ENCODE measurements at regions of chr12 and their contacts with region 1.

Region 1: GRCh38 chr12:57452937-57453509 is 2.1 kb upstream of the INHBE start:
- DNase-seq: peak in 1 of 5 donors; percentile 41
- H3K4me3 ChIP-seq: no peak overlapping the region
- H3K4me3 Mint-ChIP-seq: no peak overlapping the region
- H3K27ac ChIP-seq: no peak overlapping the region
- H3K27ac Mint-ChIP-seq: no peak overlapping the region
- H3K4me1 ChIP-seq: peaks cover 4% of the 10 kb centered on the region
- H3K4me1 Mint-ChIP-seq: peaks cover 3 to 12% (median 6%) of the 10 kb centered on the region in 4 donors
- H3K27me3 ChIP-seq: no peaks in the 10 kb centered on the region
- H3K27me3 Mint-ChIP-seq: peaks cover 0 to 6% of the 10 kb centered on the region in 2 donors

Region 2: DNA sequence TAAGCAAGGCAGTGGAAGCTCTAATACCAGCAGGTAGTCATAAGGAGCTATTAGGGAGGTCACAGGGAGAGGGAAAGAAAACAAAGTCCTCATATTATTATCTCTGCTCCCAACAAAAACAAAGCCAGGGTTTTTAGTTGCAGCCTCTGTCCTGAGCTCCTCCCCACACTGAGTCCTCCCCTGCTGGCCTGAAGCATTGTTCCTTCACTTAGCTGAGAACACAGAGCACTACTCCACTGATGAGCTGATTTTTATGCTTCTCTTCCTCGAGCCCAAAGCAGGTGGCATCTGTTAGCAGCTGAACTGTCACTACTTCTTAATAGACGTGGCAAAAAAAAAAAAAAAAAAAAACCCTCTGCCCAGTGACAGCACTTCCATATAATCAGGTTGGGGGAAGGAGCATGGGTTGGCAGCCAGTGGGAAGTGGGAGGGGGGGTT is 191.6 kb before region 1 on chr12:
- CTCF ChIA-PET with region 1: interaction called, 43 read pairs
- POLR2A ChIA-PET with region 1: no interaction called
- intact Hi-C with region 1: loop called (anchors 1 kb)
- DNase-seq: no peak
- H3K4me3 ChIP-seq: no peak overlapping the region
- H3K4me3 Mint-ChIP-seq: no peak overlapping the region
- H3K27ac ChIP-seq: no peak overlapping the region
- H3K27ac Mint-ChIP-seq: peak overlapping the region in 1 of 7 donors; percentile 30
- H3K4me1 ChIP-seq: no peaks in the 10 kb centered on the region
- H3K4me1 Mint-ChIP-seq: peaks cover 0 to 4% (median 2%) of the 10 kb centered on the region in 4 donors
- H3K27me3 ChIP-seq: no peaks in the 10 kb centered on the region
- H3K27me3 Mint-ChIP-seq: no peaks in the 10 kb centered on the region

Region 3: GRCh38 chr12:57309420-57309819 is 143.6 kb before region 1 on chr12:
- CTCF ChIA-PET with region 1: interaction called, 16 read pairs
- POLR2A ChIA-PET with region 1: no interaction called
- intact Hi-C with region 1: no loop called
- DNase-seq: no peak
- H3K4me3 ChIP-seq: no peak overlapping the region
- H3K4me3 Mint-ChIP-seq: no peak overlapping the region
- H3K27ac ChIP-seq: no peak overlapping the region
- H3K27ac Mint-ChIP-seq: peak overlapping the region in 1 of 7 donors; percentile 40
- H3K4me1 ChIP-seq: no peaks in the 10 kb centered on the region
- H3K4me1 Mint-ChIP-seq: peaks cover 0 to 4% (median 2%) of the 10 kb centered on the region in 4 donors
- H3K27me3 ChIP-seq: no peaks in the 10 kb centered on the region
- H3K27me3 Mint-ChIP-seq: no peaks in the 10 kb centered on the region

Region 4: GRCh38 chr12:57355734-57356133 is 97.3 kb before region 1 on chr12:
- CTCF ChIA-PET with region 1: no interaction called
- POLR2A ChIA-PET with region 1: no interaction called
- intact Hi-C with region 1: no loop called
- DNase-seq: no peak
- H3K4me3 ChIP-seq: no peak overlapping the region
- H3K4me3 Mint-ChIP-seq: no peak overlapping the region
- H3K27ac ChIP-seq: no peak overlapping the region
- H3K27ac Mint-ChIP-seq: peak overlapping the region in 1 of 7 donors; percentile 30
- H3K4me1 ChIP-seq: no peaks in the 10 kb centered on the region
- H3K4me1 Mint-ChIP-seq: peaks cover 0 to 5% (median under 1%) of the 10 kb centered on the region in 4 donors
- H3K27me3 ChIP-seq: no peaks in the 10 kb centered on the region
- H3K27me3 Mint-ChIP-seq: no peaks in the 10 kb centered on the region

Region 5: DNA sequence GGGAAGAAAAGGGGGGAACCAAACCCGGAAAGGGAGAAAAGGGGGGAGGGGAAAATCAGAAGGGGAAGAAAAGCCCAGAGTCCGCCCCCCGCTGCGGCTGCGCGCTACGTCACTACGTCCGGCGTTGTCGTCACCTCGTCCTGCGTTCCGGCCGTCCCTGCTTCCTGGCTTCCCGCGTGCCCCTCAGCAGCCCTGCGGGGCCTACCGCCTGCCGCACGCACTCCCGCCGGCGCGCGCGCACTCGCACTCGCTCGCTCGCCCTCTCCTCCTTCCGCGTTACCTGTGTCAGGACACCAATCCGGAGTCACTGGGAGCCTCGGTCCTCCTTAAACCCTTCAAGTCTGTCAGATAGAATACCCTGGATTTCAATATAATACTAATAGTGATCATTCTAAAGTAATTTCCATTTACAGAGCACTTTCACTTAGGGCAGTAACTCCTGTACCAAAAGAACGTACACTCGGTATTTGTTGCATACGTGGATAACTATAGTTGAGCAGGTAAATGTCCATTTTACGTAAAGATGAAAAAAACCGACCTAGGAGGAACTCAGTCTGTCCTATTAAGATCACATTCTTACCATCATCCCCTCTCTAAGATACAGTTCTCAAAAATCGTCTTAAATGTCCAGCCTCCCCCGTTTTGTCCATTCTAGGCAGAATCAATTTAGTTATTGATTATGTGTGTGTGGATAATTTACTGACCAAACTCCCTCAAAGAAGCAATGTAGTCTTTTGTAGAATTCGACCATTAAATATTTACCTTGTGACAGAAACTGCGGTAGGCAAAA is 21.9 kb before region 1 on chr12 and contains the start of gene R3HDM2:
- CTCF ChIA-PET with region 1: interaction called, 16 read pairs
- POLR2A ChIA-PET with region 1: interaction called, 17 read pairs
- intact Hi-C with region 1: no loop called
- DNase-seq: peak; percentile 94 to 96 (median 95)
- H3K4me3 ChIP-seq: peak within 1 kb of the TSS; percentile 33 to 67
- H3K4me3 Mint-ChIP-seq: peak within 1 kb of the TSS; percentile 97 to 100 (median 99)
- H3K27ac ChIP-seq: peak within 1 kb of the TSS; percentile 90
- H3K27ac Mint-ChIP-seq: peak within 1 kb of the TSS; percentile 97 to 100 (median 100)
- H3K4me1 ChIP-seq: peaks cover 21% of the 10 kb centered on the region
- H3K4me1 Mint-ChIP-seq: peaks cover 24 to 48% (median 39%) of the 10 kb centered on the region in 4 donors
- H3K27me3 ChIP-seq: no peaks in the 10 kb centered on the region
- H3K27me3 Mint-ChIP-seq: no peaks in the 10 kb centered on the region
- total RNA-seq, gene R3HDM2: 124 to 132 TPM

Region 6: GRCh38 chr12:57476162-57476992 is 23.4 kb after region 1 on chr12:
- CTCF ChIA-PET with region 1: interaction called, 204 read pairs
- POLR2A ChIA-PET with region 1: interaction called, 225 read pairs
- intact Hi-C with region 1: no loop called
- DNase-seq: peak; percentile 65 to 80 (median 71)
- H3K4me3 ChIP-seq: peak overlapping the region; percentile 91 to 97
- H3K4me3 Mint-ChIP-seq: peak overlapping the region; percentile 89 to 99 (median 98)
- H3K27ac ChIP-seq: peak overlapping the region; percentile 86
- H3K27ac Mint-ChIP-seq: peak overlapping the region; percentile 98 to 100 (median 99)
- H3K4me1 ChIP-seq: peaks cover 81% of the 10 kb centered on the region
- H3K4me1 Mint-ChIP-seq: peaks cover 51 to 89% (median 69%) of the 10 kb centered on the region in 4 donors
- H3K27me3 ChIP-seq: no peaks in the 10 kb centered on the region
- H3K27me3 Mint-ChIP-seq: no peaks in the 10 kb centered on the region